Mammary epithelial cell (primary cell): ENCODE measurements at regions of chr1 and their contacts with region 1.

Region 1: GRCh38 chr1:228004331-228004855 is 2.4 kb upstream of the WNT3A start:
- DNase-seq: peak; percentile 21
- H3K4me3 ChIP-seq: no peak overlapping the region
- H3K27ac ChIP-seq: no peak overlapping the region
- H3K4me1 ChIP-seq: peaks cover 6% of the 10 kb centered on the region
- H3K27me3 ChIP-seq: peaks cover 36% of the 10 kb centered on the region
- CTCF ChIP-seq: peak; percentile 51 to 77

Region 2: GRCh38 chr1:227753999-227754711 is 250.2 kb before region 1 on chr1:
- CTCF ChIA-PET with region 1: no interaction called
- dilution Hi-C with region 1: no loop called
- in situ Hi-C with region 1: no loop called
- intact Hi-C with region 1: no loop called
- DNase-seq: no peak
- H3K4me3 ChIP-seq: no peak overlapping the region
- H3K27ac ChIP-seq: no peak overlapping the region
- H3K4me1 ChIP-seq: peaks cover 7% of the 10 kb centered on the region
- H3K27me3 ChIP-seq: no peaks in the 10 kb centered on the region
- CTCF ChIP-seq: no peak

Region 3: DNA sequence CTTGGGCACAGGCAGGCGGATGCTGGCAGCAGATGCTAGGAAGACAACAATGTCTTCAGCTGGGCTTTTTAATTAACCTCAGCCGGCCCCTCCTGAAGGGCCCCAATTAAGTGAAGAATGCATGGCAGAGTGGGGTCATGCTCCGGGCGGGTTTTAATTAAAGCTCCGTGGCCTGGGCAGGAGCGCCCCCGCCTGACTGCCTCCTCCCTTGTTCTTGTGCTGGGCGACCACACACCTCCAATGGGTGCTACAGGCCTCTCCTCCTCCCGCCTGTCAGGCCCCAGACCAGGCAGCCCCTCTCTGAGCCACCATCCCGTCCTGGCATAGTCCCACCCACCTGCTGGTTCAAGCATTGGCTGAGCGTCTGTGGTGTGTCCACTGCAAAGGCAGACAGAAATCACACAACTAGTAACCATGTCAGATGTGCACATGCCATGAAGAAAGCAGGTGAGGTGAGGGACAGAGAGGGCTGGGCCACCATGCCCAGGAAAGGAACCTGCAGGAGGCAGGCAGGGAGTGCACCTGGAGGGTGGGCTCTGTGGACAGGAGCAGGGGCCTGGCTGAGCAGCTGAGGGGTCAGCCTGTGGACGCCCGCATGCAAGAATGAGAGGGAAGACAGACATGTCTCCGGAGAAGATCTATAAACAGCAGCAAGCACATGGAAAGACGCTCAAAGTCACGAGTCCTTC is 69.6 kb after region 1 on chr1:
- CTCF ChIA-PET with region 1: interaction called, 20 read pairs
- dilution Hi-C with region 1: no loop called
- in situ Hi-C with region 1: no loop called
- intact Hi-C with region 1: loop called (anchors 1 kb)
- DNase-seq: no peak
- H3K4me3 ChIP-seq: no peak overlapping the region
- H3K27ac ChIP-seq: no peak overlapping the region
- H3K4me1 ChIP-seq: no peaks in the 10 kb centered on the region
- H3K27me3 ChIP-seq: no peaks in the 10 kb centered on the region
- CTCF ChIP-seq: peak; percentile 19 to 47

Region 4: GRCh38 chr1:228082135-228082891 is 77.9 kb after region 1 on chr1 and contains the start of gene ARF1:
- CTCF ChIA-PET with region 1: interaction called, 3 read pairs
- dilution Hi-C with region 1: no loop called
- in situ Hi-C with region 1: loop called in 1 of 2 experiments (anchors 10 kb)
- intact Hi-C with region 1: no loop called
- DNase-seq: peak; percentile 88
- H3K4me3 ChIP-seq: peak within 1 kb of the TSS; percentile 92 to 93 (median 92)
- H3K27ac ChIP-seq: peak within 1 kb of the TSS; percentile 66
- H3K4me1 ChIP-seq: peaks cover 41% of the 10 kb centered on the region
- H3K27me3 ChIP-seq: no peaks in the 10 kb centered on the region
- CTCF ChIP-seq: no peak
- total RNA-seq, gene ARF1: 327 to 372 TPM

Region 5: GRCh38 chr1:228515200-228515834 is 510.9 kb after region 1 on chr1:
- CTCF ChIA-PET with region 1: no interaction called
- dilution Hi-C with region 1: no loop called
- in situ Hi-C with region 1: no loop called
- intact Hi-C with region 1: loop called (anchors 1 kb)
- DNase-seq: no peak
- H3K4me3 ChIP-seq: no peak overlapping the region
- H3K27ac ChIP-seq: no peak overlapping the region
- H3K4me1 ChIP-seq: no peaks in the 10 kb centered on the region
- H3K27me3 ChIP-seq: peaks cover 4% of the 10 kb centered on the region
- CTCF ChIP-seq: peak; percentile 54 to 67